PC-3 (cell line): ENCODE measurements at regions of chrX and their contacts with region 1.

Region 1: DNA sequence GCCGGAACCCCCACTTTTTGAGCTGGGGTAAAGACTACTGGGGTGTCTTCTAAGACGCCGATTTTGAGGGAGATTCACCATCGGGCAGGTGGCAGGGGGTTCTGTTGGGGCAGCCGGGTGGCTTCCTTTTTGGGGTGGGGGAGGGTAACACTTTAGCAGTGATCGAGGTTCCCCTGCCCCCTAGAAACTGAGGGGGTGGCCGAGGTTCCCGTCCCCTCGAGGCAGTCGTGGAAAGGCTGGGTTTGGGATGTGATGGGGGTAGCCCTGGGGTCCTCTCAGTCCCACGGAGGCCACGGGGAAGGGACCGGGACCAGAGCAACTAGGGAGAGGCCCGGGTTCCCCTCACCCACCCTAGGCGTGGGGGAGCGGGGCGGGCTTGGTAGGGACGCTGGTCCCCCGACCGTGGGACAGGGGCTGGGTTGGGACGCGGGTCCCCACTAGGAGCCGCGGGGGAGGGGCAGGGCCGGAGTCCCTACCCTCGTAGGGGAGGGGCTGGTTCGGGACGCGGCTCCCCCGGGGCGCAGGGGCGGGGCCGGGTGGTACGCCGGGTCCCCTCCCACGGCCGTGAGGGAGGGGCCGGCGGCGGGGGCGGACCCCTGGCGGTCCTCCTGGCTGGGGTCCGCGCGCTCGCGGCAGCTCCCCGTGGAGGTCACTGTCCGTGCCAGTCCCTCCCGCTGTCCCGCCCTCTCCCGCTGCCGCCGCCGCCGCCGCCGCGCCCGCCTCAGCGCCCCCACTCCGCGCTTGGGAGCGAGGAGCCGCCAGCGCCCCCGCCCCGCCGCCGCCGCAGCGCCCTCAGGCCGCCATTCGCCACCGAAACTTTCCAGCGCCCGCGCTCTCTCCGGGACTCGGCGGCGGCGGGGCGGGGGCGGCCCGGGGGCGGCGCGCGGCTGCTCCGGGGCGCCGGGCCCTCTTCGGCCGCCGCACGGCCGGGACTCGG is at the start of gene TBL1X:
- DNase-seq: peak; percentile 67
- ATAC-seq: peak; percentile 44
- H3K4me3 ChIP-seq: peak within 1 kb of the TSS; percentile 86
- H3K27ac ChIP-seq: peak within 1 kb of the TSS; percentile 96
- H3K4me1 ChIP-seq: peaks cover 39% of the 10 kb centered on the region
- H3K27me3 ChIP-seq: no peaks in the 10 kb centered on the region
- CTCF ChIP-seq: no peak
- total RNA-seq, gene TBL1X: 31.9 and 51.6 TPM in 2 replicates

Region 2: GRCh38 chrX:8868906-8869305 is 595.8 kb before region 1 on chrX:
- CTCF ChIA-PET with region 1: no interaction called
- POLR2A ChIA-PET with region 1: interaction called, 4 read pairs
- intact Hi-C with region 1: loop called (anchors 1 kb)
- DNase-seq: peak; percentile 57
- ATAC-seq: peak; percentile 70
- H3K4me3 ChIP-seq: peak overlapping the region; percentile 57
- H3K27ac ChIP-seq: peak overlapping the region; percentile 100
- H3K4me1 ChIP-seq: peaks cover 44% of the 10 kb centered on the region
- H3K27me3 ChIP-seq: no peaks in the 10 kb centered on the region
- CTCF ChIP-seq: peak; percentile 64

Region 3: DNA sequence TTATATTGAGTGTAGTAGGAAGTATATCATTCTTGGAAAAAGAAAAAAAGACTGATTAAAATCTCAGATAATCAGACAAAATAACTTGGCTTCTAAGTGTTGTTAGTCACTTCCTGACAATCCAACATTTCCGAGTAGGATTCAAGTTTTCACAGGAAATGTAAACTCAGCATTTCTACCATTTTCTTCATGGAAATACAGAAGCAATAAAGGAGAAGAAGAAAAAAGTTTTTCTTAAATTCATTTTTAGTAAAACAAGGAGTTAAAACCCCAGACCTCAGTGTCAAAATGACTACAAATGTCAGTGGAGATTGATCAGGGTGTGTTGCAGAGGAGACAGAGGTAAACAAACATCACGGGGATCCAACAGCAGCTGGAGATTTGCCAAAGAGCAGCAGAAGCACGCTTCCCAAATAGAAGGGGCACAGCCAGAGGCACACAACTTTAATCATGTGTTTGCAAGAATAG is 301.5 kb before region 1 on chrX:
- CTCF ChIA-PET with region 1: no interaction called
- POLR2A ChIA-PET with region 1: no interaction called
- intact Hi-C with region 1: loop called (anchors 5 kb)
- DNase-seq: peak; percentile 79
- ATAC-seq: peak; percentile 56
- H3K4me3 ChIP-seq: peak overlapping the region; percentile 28; the same call in 1 of the 2 replicates
- H3K27ac ChIP-seq: peak overlapping the region; percentile 98
- H3K4me1 ChIP-seq: peaks cover 55% of the 10 kb centered on the region
- H3K27me3 ChIP-seq: no peaks in the 10 kb centered on the region
- CTCF ChIP-seq: no peak

Region 4: GRCh38 chrX:9336456-9336855 is 128.2 kb before region 1 on chrX:
- CTCF ChIA-PET with region 1: no interaction called
- POLR2A ChIA-PET with region 1: no interaction called
- intact Hi-C with region 1: no loop called
- DNase-seq: no peak
- ATAC-seq: no peak
- H3K4me3 ChIP-seq: no peak overlapping the region
- H3K27ac ChIP-seq: no peak overlapping the region
- H3K4me1 ChIP-seq: peaks cover 18% of the 10 kb centered on the region
- H3K27me3 ChIP-seq: no peaks in the 10 kb centered on the region
- CTCF ChIP-seq: no peak

Region 5: GRCh38 chrX:9352694-9353411 is 111.8 kb before region 1 on chrX:
- CTCF ChIA-PET with region 1: no interaction called
- POLR2A ChIA-PET with region 1: interaction called, 4 read pairs
- intact Hi-C with region 1: loop called (anchors 1 kb)
- DNase-seq: peak; percentile 39
- ATAC-seq: no peak
- H3K4me3 ChIP-seq: peak overlapping the region; percentile 41; the same call in 1 of the 2 replicates
- H3K27ac ChIP-seq: peak overlapping the region; percentile 76
- H3K4me1 ChIP-seq: peaks cover 38% of the 10 kb centered on the region
- H3K27me3 ChIP-seq: no peaks in the 10 kb centered on the region
- CTCF ChIP-seq: no peak

Region 6: GRCh38 chrX:9396930-9397329 is 67.8 kb before region 1 on chrX:
- CTCF ChIA-PET with region 1: no interaction called
- POLR2A ChIA-PET with region 1: no interaction called
- intact Hi-C with region 1: loop called (anchors 2 kb)
- DNase-seq: peak; percentile 28
- ATAC-seq: peak; percentile 84
- H3K4me3 ChIP-seq: no peak overlapping the region
- H3K27ac ChIP-seq: peak overlapping the region; percentile 17; the same call in 1 of the 2 replicates
- H3K4me1 ChIP-seq: peaks cover 10% of the 10 kb centered on the region
- H3K27me3 ChIP-seq: no peaks in the 10 kb centered on the region
- CTCF ChIP-seq: no peak

Region 7: GRCh38 chrX:9677098-9677739 is 212.5 kb after region 1 on chrX:
- CTCF ChIA-PET with region 1: no interaction called
- POLR2A ChIA-PET with region 1: no interaction called
- intact Hi-C with region 1: loop called (anchors 10 kb)
- DNase-seq: peak; percentile 56
- ATAC-seq: peak; percentile 67
- H3K4me3 ChIP-seq: peak overlapping the region; percentile 24
- H3K27ac ChIP-seq: peak overlapping the region; percentile 70
- H3K4me1 ChIP-seq: peaks cover 9% of the 10 kb centered on the region; the same call in 1 of the 2 replicates
- H3K27me3 ChIP-seq: no peaks in the 10 kb centered on the region
- CTCF ChIP-seq: no peak